Heart left ventricle (tissue), 16 donors: ENCODE measurements at regions of chr3 and their contacts with region 1.

Region 1: DNA sequence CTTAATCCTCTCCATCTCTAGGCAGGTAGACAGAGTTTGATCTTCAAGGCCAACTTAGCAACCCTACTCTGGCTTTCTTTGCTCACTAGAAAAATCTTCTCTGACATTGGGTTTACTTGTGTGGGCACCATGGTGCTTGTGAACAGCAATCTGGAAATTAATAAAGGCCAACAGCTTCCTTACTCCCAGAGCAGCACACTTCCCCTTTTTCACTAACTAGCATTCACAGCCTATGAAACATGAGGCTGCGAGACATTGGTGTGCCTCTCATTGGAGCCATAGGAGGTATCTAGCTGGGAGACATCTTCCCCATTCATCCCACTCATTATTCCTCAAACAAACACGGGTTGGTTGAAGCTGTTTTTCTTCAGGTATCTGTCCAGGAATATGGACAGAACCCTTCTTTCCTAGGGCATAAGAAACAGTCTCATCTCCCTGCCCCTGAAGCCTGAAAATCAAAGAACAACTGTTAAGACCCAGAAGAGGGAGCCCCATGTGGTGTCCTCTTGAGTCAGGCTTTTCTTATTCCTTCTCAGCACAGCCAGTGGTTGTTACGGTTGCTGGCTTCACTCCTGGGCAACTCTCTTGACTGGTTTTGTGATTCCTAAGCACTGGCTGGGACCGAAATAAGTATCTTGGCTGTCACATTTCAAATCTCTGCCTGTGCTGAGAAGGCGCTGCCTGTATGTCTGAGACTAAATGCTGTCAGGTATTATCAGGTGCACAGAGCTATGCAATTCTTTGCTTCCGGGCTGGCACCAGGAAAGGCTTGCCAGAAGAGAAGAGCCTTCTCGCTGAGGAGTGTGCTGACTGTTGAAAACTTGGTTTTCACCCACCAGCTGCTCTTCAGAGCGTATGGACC is 194.4 kb downstream of the FEZF2 start:
- DNase-seq: no peak
- ATAC-seq: peak in 2 of 4 donors; percentile 17 to 36
- H3K4me3 ChIP-seq: no peak overlapping the region
- H3K27ac ChIP-seq: peak overlapping the region in 2 of 12 donors; percentile 4 to 50
- H3K4me1 ChIP-seq: peaks cover 0 to 31% (median 16%) of the 10 kb centered on the region in 12 donors
- H3K27me3 ChIP-seq: no peaks in the 10 kb centered on the region
- CTCF ChIP-seq: no peak
- POLR2A ChIP-seq: no peak

Region 2: DNA sequence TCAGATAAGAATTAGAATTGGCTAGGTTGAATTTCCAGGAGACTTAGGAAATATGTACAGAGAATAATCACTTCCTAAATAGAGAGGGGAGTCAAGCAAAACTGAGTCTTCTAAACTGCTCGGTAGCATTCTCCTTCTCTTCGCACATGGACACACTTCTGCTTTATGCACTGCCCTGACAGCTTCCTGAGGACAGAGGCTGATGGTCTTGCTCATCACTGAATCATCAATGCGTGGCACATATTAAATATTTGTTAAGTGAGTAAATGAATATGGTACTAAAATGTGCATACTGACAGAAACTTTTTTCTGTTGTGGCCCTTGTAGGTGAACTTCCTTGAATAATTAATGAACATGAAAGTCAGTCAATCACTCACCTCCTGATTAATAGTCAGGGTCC is 1243.3 kb before region 1 on chr3:
- intact Hi-C with region 1: no loop called
- DNase-seq: no peak
- ATAC-seq: no peak
- H3K4me3 ChIP-seq: no peak overlapping the region
- H3K27ac ChIP-seq: no peak overlapping the region
- H3K4me1 ChIP-seq: no peaks in the 10 kb centered on the region
- H3K27me3 ChIP-seq: no peaks in the 10 kb centered on the region
- CTCF ChIP-seq: no peak
- POLR2A ChIP-seq: no peak

Region 3: GRCh38 chr3:62139936-62140335 is 39.0 kb before region 1 on chr3:
- intact Hi-C with region 1: loop called in 1 of 10 experiments (anchors 5 kb)
- DNase-seq: no peak
- ATAC-seq: no peak
- H3K4me3 ChIP-seq: no peak overlapping the region
- H3K27ac ChIP-seq: no peak overlapping the region
- H3K4me1 ChIP-seq: peaks cover 0 to 25% (median 6%) of the 10 kb centered on the region in 12 donors
- H3K27me3 ChIP-seq: no peaks in the 10 kb centered on the region
- CTCF ChIP-seq: no peak
- POLR2A ChIP-seq: no peak